ENCODE measurements at regions of chr16 and their contacts with region 1.

Region 1: GRCh38 chr16:75110637-75111513 is 5.7 kb downstream of the LDHD start:
- DNase-seq: peak; percentile 92
- CTCF ChIP-seq: peak; percentile 93

Region 2: GRCh38 chr16:74709441-74709877 is 401.4 kb before region 1 on chr16:
- CTCF ChIA-PET with region 1: interaction called, 13 read pairs
- POLR2A ChIA-PET with region 1: no interaction called
- DNase-seq: peak; percentile 85
- CTCF ChIP-seq: peak; percentile 96

Region 3: GRCh38 chr16:74936902-74937560 is 173.8 kb before region 1 on chr16:
- CTCF ChIA-PET with region 1: interaction called, 10 read pairs
- POLR2A ChIA-PET with region 1: no interaction called
- DNase-seq: peak; percentile 57
- CTCF ChIP-seq: no peak

Region 4: GRCh38 chr16:74984535-74985296 is 126.2 kb before region 1 on chr16 and contains the start of gene WDR59:
- CTCF ChIA-PET with region 1: interaction called, 14 read pairs
- POLR2A ChIA-PET with region 1: no interaction called
- DNase-seq: peak; percentile 98
- CTCF ChIP-seq: no peak

Region 5: DNA sequence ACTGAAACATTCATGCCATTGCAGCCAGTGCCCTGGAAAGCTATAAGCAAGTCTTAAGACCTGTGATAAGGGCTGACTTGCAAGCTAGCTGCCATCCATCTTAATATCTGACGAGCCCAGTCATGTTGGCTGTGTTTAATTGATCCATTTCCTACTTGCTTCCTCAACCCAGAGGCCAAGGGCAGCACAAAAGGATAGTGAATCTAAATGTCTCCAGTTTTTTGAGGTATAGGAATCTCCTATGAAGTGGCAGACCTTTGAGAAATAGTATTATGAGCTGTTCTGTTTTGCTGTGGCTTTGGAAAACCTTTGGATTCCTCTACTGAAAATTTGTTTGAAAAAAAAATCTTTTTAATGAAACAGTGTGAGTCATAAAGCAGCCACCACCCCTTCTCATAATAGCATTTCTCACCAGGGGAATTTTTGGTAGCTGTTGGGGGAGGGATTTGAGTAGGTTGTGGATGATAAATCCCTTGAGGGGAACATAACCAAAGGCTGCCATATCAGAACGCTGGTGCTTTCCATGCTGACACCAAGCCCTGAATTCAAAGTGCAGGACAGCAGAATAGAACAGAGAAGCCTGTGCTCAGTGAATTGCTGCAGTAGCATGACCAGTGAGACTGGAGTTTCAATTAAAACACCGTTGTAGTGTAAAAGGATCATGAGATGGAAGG is 99.1 kb before region 1 on chr16:
- CTCF ChIA-PET with region 1: interaction called, 20 read pairs
- POLR2A ChIA-PET with region 1: no interaction called
- DNase-seq: peak; percentile 58
- CTCF ChIP-seq: no peak

Region 6: DNA sequence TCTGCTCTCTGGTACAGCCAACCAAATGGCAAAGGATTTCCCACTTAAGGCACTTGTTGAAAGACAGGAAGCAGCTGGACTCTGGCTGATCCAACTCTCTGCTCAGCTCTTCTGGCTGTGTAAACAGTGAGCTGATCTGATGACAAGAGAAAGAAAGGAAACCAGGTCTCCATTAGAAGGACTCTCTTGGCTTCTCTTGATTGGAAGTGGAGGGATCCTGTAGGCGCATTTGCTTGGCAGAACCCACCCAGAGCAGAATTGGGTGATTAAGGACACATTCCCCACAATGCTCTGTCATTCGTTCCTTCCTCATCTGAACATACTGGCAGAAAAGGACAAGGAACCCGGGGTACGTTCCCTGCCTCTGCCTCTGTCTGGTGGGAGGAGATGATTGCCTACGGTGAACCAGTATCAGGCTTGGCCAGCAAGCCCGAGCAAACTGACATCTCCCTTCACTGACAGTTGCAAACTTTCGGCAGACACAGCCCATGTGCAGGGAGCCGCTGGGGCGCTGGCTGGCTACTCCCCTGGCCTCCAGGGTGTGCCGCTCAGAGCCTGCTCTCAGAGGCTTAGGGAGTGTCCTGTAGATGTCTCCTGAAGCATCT is 23.4 kb before region 1 on chr16:
- CTCF ChIA-PET with region 1: interaction called, 17 read pairs
- POLR2A ChIA-PET with region 1: no interaction called
- DNase-seq: no peak
- CTCF ChIP-seq: no peak

Region 7: DNA sequence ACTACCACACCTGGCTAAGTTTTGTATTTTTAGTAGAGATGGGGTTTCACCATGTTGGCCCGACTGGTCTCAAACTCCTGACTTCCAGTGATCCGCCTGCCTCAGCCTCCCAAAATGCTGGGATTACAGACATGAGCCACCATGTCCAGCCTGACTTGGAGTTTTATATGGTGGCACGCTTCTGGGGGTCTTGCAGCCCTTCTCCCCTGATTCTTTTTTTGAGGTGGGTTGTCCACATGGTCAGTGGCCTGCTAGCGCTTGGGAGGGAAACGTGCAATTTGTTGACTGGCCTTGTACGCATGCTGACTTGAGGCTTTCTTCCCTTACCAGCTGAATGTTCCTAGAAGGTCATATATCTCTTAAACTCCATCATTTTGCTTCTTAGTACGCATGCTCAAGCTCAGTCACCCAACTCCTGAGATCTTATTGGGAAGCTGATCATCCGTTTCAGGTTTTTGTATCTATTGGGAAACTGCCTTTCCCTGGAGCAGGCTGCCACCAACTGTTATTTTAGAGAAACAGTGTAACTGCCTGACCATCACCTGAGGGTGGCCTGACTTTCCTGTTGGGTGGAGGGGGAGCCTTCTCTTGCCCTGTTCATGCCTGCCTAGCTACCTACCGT is 19.4 kb after region 1 on chr16:
- CTCF ChIA-PET with region 1: interaction called, 13 read pairs
- POLR2A ChIA-PET with region 1: no interaction called
- DNase-seq: no peak
- CTCF ChIP-seq: no peak